ENCODE measurements at regions of chr2 and their contacts with region 1.

Region 1: DNA sequence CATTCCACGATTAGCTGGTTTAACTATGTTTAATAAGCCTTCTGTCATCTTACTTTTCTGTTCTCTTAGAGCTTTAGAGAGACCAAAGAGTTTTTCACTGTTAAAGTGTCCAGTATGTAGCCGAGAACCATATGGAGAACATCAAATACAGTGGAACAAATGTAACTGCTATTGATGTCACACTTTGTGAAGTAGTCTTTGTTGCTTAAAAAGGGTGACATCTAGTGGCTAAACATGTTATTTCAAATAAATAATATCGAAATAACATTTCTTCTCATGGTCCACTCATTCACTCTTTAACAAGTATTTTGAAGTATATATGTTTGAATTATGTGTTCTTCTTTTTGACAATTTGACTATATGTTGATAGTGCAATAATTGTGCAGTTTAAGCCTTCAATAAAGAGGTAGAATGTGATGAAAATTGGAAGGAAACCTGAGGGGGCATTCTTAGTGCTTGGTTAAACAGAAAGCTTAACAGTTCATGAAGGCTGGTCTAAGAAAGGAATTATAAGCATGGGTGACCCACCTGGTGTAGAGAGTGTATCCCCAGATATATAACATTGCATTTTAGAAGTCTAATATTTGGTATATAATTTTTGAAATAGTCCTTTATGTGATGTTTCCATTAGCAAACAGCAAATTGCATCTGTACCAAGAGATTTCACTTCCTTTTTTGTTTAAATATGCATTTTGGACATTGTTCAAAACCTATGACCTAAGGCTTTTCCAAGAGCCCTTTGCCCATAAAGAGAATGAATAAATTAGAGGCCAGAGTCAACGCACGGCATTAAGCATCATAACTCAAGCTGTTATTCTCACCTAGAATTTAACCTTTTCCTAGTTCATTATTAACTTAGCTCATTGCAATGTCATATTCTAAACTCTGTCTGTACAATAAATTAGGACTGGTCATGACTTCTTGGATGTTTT is 112.1 kb downstream of the KYNU start:
- DNase-seq: peak in 1 of 35 experiments; percentile 28
- ATAC-seq: peak in 1 of 4 experiments; percentile 20
- H3K4me3 ChIP-seq: no peak overlapping the region
- H3K4me3 Mint-ChIP-seq: no peak overlapping the region
- H3K27ac ChIP-seq: no peak overlapping the region
- H3K27ac Mint-ChIP-seq: no peak overlapping the region
- H3K4me1 ChIP-seq: no peaks in the 10 kb centered on the region
- H3K4me1 Mint-ChIP-seq: peaks cover 0 to 3% (median 2%) of the 10 kb centered on the region in 3 donors
- H3K27me3 ChIP-seq: no peaks in the 10 kb centered on the region
- H3K27me3 Mint-ChIP-seq: peaks cover 4 to 11% of the 10 kb centered on the region in 2 donors

Region 2: GRCh38 chr2:142974288-142975024 is 15.1 kb before region 1 on chr2:
- CTCF ChIA-PET with region 1: interaction called, 14 to 16 read pairs
- POLR2A ChIA-PET with region 1: interaction called in 1 of 2 experiments, 3 read pairs
- DNase-seq: no peak
- ATAC-seq: no peak
- H3K4me3 ChIP-seq: no peak overlapping the region
- H3K4me3 Mint-ChIP-seq: no peak overlapping the region
- H3K27ac ChIP-seq: no peak overlapping the region
- H3K27ac Mint-ChIP-seq: no peak overlapping the region
- H3K4me1 ChIP-seq: no peaks in the 10 kb centered on the region
- H3K4me1 Mint-ChIP-seq: no peaks in the 10 kb centered on the region
- H3K27me3 ChIP-seq: no peaks in the 10 kb centered on the region
- H3K27me3 Mint-ChIP-seq: no peaks in the 10 kb centered on the region

Measured in T-cell (primary cell).